ENCODE measurements at regions of chr12 and their contacts with region 1.

Region 1: DNA sequence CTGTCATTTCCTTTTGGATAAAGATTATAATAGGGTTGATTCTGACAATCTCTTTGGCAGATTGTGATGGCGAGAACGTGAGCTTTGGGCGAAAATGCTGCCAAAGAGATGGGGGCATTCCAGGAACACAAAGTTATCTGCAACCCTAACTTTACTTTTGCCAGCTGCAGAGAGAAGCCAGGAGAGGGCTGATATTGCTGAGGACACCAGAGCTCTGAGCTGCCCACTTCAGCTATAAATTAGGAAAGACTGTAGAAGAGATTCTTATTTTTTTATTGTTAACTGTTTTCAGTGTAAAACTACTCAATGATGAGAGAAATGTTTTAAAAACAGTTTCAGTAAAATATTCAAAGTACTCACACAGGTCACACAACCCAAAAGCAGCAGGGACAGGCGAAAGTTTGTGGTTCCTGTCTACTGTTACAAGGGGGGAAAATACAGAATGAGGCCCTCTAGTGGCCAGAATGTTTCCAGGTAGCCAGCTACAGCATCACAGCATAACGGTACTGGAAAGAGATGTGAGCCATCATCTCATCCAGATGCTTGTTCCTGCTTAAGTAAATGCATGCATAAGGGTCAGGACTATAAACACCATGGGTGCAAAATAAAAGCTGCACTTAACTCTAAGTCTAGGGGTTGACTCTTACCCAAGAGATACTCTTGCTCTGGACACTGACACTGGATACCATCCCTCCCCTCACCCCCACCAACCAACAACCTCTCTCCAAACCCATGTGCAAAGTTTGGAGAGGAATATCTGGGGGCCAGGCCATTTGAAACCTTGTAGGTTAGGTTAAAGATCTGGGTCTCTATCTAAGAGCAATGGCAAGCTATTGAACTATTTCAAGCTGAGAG is 498.4 kb downstream of the RMST start:
- DNase-seq: peak; percentile 20
- CTCF ChIP-seq: peak; percentile 55

Region 2: DNA sequence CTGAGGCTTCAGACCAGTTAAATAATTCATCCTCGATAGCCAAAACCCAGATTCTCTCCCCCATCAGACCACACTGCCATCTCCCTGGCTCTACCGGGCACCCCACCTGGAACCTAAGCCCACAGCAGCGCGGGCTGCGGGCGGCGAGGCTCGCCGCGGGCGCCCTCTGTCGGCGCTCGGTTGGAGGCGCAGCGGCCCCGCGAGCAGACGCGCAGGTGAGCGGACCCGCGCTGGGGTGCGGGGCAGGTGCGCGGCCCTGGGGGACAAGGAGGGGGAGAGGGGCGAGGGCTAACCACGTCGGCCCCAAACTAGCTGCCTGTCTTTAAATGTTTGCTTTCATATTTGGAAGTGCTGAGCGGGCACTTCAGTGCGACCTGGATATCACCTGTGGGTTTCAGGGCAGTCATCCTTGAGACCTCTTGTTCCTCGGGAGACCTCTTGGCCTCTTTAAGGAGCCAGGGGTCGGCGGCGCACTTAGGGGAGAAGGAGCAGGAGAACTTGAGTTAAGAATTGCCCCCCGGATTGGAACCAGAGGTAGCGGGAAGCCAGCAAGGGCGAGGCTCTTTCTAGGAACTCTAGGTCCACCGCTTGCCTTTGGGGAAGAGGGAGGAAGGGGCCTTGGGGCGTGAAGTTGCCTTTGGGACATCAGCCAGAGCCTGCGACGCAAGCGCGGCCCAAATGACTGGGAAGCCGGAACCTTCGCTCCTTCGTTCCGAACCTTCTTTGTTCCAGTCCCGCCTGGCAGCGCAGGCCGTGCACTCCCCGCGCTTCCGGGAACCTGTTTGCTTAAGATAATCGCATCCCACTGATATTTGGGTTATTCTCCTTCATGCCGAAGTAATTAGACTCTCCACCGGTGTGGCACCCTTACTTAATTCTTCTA is 975.3 kb before region 1 on chr12:
- CTCF ChIA-PET with region 1: interaction called, 20 read pairs
- POLR2A ChIA-PET with region 1: no interaction called
- DNase-seq: peak; percentile 74
- CTCF ChIP-seq: peak; percentile 91

Region 3: DNA sequence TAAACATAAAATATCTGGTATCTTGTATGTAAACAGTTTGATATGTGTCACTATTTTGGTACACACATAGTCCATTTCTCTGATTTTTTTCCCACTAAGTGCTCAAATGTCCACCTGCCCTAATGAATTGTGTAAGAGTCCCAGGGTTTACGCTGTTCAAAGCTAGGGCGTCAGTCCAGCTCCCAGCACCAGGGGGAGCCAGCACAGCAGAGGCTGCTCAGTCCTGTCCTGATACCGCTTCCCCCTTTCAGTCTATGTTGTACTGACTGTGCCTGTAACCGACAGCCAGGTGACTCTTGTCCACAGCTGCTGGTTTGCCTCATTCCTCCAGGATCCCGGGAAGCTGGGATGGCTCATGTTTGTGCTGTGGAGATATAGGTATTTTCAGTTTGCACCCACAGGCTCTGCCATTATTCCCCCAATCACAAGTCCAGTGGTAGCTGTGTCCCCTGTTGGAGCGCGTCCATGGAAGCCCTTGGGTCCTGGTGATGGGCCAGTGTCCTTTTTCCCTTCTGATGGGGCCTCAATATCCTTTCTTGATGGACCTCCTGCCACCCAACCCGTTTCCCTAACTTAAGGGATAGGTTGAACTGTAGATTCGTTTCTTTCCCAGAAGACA is 811.9 kb before region 1 on chr12:
- CTCF ChIA-PET with region 1: interaction called, 25 read pairs
- POLR2A ChIA-PET with region 1: no interaction called
- DNase-seq: peak; percentile 54
- CTCF ChIP-seq: peak; percentile 90

Region 4: DNA sequence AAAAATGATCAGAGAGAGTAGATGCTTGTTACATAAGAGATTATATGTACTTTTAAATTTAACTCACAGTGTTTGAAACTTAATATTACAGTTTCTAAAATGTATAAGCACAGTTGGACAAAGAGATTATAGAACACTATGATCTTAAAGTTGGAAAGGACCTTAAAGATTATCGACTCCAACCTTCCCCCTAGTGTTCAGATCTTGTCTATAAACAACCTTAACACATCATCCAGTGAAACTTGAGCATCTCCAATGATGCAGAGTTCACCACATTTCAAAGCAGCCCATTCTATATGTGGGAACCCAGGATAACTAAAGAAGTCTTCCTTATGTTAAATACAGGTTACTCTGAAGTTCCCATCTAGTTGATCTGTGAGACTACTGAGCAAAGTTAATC is 17.6 kb before region 1 on chr12:
- CTCF ChIA-PET with region 1: interaction called, 38 read pairs
- POLR2A ChIA-PET with region 1: no interaction called
- DNase-seq: no peak
- CTCF ChIP-seq: no peak

Region 5: DNA sequence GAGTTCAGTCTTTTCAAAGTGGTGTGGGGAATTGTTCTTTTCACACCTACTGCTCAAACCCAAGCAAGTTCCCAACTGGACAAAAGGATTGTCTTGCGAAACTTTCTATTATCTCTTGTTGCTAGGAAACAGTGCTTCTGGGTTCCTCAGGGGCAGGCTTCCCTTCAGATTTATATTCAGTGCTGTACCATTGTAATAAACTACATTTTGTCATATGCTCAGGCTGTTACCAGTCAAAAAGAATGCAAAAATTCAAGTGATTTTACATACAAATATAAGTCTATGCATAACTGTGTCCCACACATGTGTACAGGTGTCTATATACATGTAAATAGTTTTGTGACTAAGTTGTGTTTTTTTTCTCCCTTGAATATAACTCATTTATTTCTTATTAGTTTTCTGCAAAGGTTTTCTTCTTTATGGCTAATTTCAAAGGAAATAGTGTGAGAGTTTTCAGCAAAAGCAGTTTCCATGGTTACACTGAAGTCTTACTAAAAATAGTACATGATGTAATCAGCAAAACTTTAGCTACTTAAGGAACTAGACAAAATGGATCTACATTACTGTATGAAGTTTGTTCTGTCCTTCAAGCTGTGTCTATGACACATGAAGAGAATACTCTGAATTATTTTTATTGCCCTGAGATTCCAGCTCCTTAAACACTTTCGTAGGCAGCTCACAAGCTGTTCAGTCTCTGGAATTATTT is 124.2 kb after region 1 on chr12:
- CTCF ChIA-PET with region 1: no interaction called
- POLR2A ChIA-PET with region 1: no interaction called
- DNase-seq: no peak
- CTCF ChIP-seq: no peak

Measured in GM10248 (cell line).